Mammary epithelial cell (primary cell): ENCODE measurements at regions of chr16 and their contacts with region 1.

Region 1: GRCh38 chr16:11133344-11133943 is 122.6 kb downstream of the SOCS1 start:
- DNase-seq: peak; percentile 91
- H3K4me3 ChIP-seq: no peak overlapping the region
- H3K27ac ChIP-seq: peak overlapping the region; percentile 41
- H3K4me1 ChIP-seq: peaks cover 54% of the 10 kb centered on the region
- H3K27me3 ChIP-seq: no peaks in the 10 kb centered on the region
- CTCF ChIP-seq: no peak

Region 2: DNA sequence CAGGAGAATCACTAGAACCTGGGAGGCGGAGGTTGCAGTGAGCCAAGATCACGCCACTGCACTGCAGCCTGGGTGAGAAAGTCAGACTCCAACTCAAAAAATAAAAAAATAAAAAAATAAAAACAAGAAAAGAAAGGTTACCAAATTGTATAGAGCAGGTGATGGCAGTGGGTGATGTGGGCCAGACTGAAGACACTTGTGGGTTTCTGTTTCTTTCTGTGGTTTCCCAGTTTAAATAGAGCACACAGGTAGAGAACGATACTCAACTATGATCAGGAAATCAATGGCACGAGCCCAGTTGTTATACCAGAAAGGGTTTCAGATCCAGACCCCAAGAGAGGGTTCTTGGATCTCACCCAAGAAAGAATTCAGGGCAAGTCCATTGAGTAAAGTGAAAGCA is 357.2 kb before region 1 on chr16:
- CTCF ChIA-PET with region 1: interaction called, 12 read pairs
- dilution Hi-C with region 1: no loop called
- in situ Hi-C with region 1: no loop called
- intact Hi-C with region 1: no loop called
- DNase-seq: no peak
- H3K4me3 ChIP-seq: no peak overlapping the region
- H3K27ac ChIP-seq: no peak overlapping the region
- H3K4me1 ChIP-seq: no peaks in the 10 kb centered on the region
- H3K27me3 ChIP-seq: no peaks in the 10 kb centered on the region
- CTCF ChIP-seq: no peak

Region 3: DNA sequence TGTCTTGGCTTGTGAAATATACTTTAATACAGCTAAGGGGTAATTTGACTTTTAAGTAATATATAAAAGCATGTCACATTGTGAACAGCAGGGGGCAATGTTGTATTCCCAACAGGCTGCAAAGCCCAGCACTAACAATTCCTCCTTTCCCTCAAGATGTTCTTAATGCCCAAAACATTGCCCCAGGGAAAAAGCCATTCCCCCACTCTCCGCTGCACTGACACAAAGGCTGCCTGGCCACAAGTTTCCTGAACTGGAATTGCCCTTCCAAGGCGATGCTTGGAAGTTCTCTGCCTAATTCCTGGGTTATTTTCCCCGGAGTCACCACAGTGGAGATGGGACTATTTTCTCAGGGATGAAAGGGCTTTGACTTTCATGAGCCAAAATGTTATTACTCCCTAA is 161.9 kb before region 1 on chr16:
- CTCF ChIA-PET with region 1: no interaction called
- dilution Hi-C with region 1: no loop called
- in situ Hi-C with region 1: no loop called
- intact Hi-C with region 1: loop called (anchors 5 kb)
- DNase-seq: peak; percentile 69
- H3K4me3 ChIP-seq: no peak overlapping the region
- H3K27ac ChIP-seq: no peak overlapping the region
- H3K4me1 ChIP-seq: peaks cover 7% of the 10 kb centered on the region
- H3K27me3 ChIP-seq: no peaks in the 10 kb centered on the region
- CTCF ChIP-seq: peak; percentile 65 to 72

Region 4: DNA sequence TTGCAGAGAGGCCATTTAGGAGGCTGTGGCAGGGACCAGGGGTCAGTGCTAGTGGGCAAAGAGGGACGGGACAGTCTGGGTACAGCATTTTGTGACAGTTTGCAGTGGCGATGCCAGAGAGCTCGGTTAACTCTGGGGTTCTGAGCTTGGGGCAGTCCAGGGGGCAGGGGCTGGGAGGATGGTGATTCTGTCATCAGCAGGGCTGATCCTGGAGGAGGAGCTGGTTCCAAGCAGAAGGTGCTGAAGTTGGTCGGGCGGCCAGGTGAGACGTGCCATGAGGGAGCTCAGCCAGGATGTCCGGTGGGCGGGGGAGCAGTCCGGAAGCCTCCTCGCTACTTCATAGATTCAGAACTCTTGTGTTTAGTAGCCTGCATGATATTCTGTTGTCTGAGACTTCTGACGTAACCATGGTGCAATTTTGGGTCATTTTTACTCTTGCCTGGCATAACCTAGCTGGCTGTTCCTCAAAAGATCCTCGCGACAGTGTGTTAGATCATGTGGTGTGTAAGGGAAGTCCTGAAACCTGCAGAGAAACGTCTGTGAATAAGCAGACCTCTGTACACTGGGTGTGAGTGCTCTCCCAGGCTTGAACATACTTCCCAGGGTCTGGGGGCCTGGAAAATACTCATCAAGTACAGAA is 67.1 kb before region 1 on chr16:
- CTCF ChIA-PET with region 1: no interaction called
- dilution Hi-C with region 1: no loop called
- in situ Hi-C with region 1: no loop called
- intact Hi-C with region 1: no loop called
- DNase-seq: no peak
- H3K4me3 ChIP-seq: no peak overlapping the region
- H3K27ac ChIP-seq: no peak overlapping the region
- H3K4me1 ChIP-seq: no peaks in the 10 kb centered on the region
- H3K27me3 ChIP-seq: no peaks in the 10 kb centered on the region
- CTCF ChIP-seq: no peak

Region 5: GRCh38 chr16:11201498-11202259 is 68.2 kb after region 1 on chr16:
- CTCF ChIA-PET with region 1: no interaction called
- dilution Hi-C with region 1: no loop called
- in situ Hi-C with region 1: no loop called
- intact Hi-C with region 1: loop called (anchors 1 kb)
- DNase-seq: peak; percentile 98
- H3K4me3 ChIP-seq: peak overlapping the region in 1 of 3 experiments; percentile 2
- H3K27ac ChIP-seq: peak overlapping the region; percentile 92
- H3K4me1 ChIP-seq: peaks cover 47% of the 10 kb centered on the region
- H3K27me3 ChIP-seq: no peaks in the 10 kb centered on the region
- CTCF ChIP-seq: no peak

Region 6: GRCh38 chr16:11255737-11256660 is 122.6 kb after region 1 on chr16 and contains the start of gene SOCS1:
- CTCF ChIA-PET with region 1: interaction called, 3 read pairs
- dilution Hi-C with region 1: no loop called
- in situ Hi-C with region 1: no loop called
- intact Hi-C with region 1: loop called (anchors 1 kb)
- DNase-seq: peak; percentile 83
- H3K4me3 ChIP-seq: peak within 1 kb of the TSS; percentile 68 to 80 (median 79)
- H3K27ac ChIP-seq: peak within 1 kb of the TSS; percentile 60
- H3K4me1 ChIP-seq: peaks cover 23% of the 10 kb centered on the region
- H3K27me3 ChIP-seq: no peaks in the 10 kb centered on the region
- CTCF ChIP-seq: peak; percentile 60 to 69
- total RNA-seq, gene SOCS1: 2.0 to 7.9 TPM